PC-9 (cell line): ENCODE measurements at regions of chr3 and their contacts with region 1.

Region 1: DNA sequence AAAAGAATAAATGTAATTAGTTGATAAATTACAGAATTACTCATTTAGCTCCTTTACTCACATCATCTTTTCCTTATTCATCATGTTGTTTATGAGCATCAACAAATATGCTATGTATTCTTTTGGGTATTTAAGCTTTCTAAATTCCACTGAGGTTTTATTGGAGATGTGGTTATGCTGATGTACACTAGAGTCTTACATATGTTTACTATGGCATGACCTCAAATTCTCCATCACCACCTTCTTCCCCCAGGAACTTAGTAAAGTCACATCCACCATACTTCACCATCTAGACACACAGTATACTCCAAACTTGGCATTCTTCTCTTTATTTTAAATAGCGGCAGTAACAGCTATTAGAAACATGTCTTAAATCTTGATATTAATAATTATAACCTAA is 74.1 kb upstream of the MELTF start:
- DNase-seq: no peak
- H3K4me3 ChIP-seq: no peak overlapping the region
- H3K27ac ChIP-seq: no peak overlapping the region
- H3K4me1 ChIP-seq: no peaks in the 10 kb centered on the region
- H3K27me3 ChIP-seq: no peaks in the 10 kb centered on the region
- CTCF ChIP-seq: no peak

Region 2: GRCh38 chr3:197068077-197068476 is 35.7 kb before region 1 on chr3:
- CTCF ChIA-PET with region 1: no interaction called
- POLR2A ChIA-PET with region 1: interaction called, 12 read pairs
- intact Hi-C with region 1: no loop called
- DNase-seq: no peak
- H3K4me3 ChIP-seq: no peak overlapping the region
- H3K27ac ChIP-seq: no peak overlapping the region
- H3K4me1 ChIP-seq: no peaks in the 10 kb centered on the region
- H3K27me3 ChIP-seq: no peaks in the 10 kb centered on the region
- CTCF ChIP-seq: no peak